Endothelial cell of umbilical vein (primary cell): ENCODE measurements at regions of chr20 and their contacts with region 1.

Region 1: GRCh38 chr20:57698117-57698866 is 11.5 kb downstream of the PMEPA1 start:
- DNase-seq: peak; percentile 99
- H3K4me3 ChIP-seq: peak overlapping the region in 1 of 3 experiments; percentile 25
- H3K27ac ChIP-seq: peak overlapping the region; percentile 80
- H3K4me1 ChIP-seq: peaks cover 30% of the 10 kb centered on the region
- H3K27me3 ChIP-seq: no peaks in the 10 kb centered on the region
- CTCF ChIP-seq: no peak
- POLR2A ChIP-seq: peak; percentile 68

Region 2: GRCh38 chr20:57175397-57176010 is 522.8 kb before region 1 on chr20:
- CTCF ChIA-PET with region 1: no interaction called
- POLR2A ChIA-PET with region 1: no interaction called
- dilution Hi-C with region 1: no loop called
- intact Hi-C with region 1: no loop called
- DNase-seq: no peak
- H3K4me3 ChIP-seq: no peak overlapping the region
- H3K27ac ChIP-seq: no peak overlapping the region
- H3K4me1 ChIP-seq: no peaks in the 10 kb centered on the region
- H3K27me3 ChIP-seq: no peaks in the 10 kb centered on the region
- CTCF ChIP-seq: no peak
- POLR2A ChIP-seq: no peak

Region 3: GRCh38 chr20:57628047-57628961 is 70.0 kb before region 1 on chr20:
- CTCF ChIA-PET with region 1: no interaction called
- POLR2A ChIA-PET with region 1: no interaction called
- dilution Hi-C with region 1: no loop called
- intact Hi-C with region 1: loop called (anchors 1 kb)
- DNase-seq: peak; percentile 86
- H3K4me3 ChIP-seq: no peak overlapping the region
- H3K27ac ChIP-seq: peak overlapping the region; percentile 61
- H3K4me1 ChIP-seq: peaks cover 8% of the 10 kb centered on the region
- H3K27me3 ChIP-seq: peaks cover 6% of the 10 kb centered on the region in 2 experiments
- CTCF ChIP-seq: no peak
- POLR2A ChIP-seq: no peak

Region 4: DNA sequence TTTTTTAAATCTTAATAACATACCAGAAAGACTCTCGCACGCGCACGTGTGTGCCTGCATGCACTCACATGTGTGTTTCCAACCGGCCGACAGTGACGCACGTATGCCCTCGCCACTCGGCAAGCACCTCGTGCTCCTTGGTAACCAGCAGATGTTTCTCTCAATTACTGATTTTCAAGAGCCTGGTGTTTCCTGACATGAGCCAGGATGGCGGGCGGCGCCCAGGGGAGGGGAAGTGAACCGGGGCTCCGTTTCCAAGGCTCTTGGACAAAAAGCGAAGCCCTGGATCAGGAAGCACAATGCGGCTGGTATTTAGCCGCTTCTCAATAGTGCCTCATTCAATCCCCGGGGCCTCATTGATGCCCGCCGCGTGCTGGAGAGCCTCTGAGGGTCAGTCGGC is 26.1 kb before region 1 on chr20:
- CTCF ChIA-PET with region 1: no interaction called
- POLR2A ChIA-PET with region 1: no interaction called
- dilution Hi-C with region 1: no loop called
- intact Hi-C with region 1: loop called (anchors 1 kb)
- DNase-seq: peak; percentile 86
- H3K4me3 ChIP-seq: no peak overlapping the region
- H3K27ac ChIP-seq: peak overlapping the region; percentile 61
- H3K4me1 ChIP-seq: peaks cover 7% of the 10 kb centered on the region
- H3K27me3 ChIP-seq: no peaks in the 10 kb centered on the region
- CTCF ChIP-seq: no peak
- POLR2A ChIP-seq: no peak

Region 5: GRCh38 chr20:57709931-57710799 is 11.9 kb after region 1 on chr20 and contains the start of gene PMEPA1:
- CTCF ChIA-PET with region 1: interaction called, 22 read pairs
- POLR2A ChIA-PET with region 1: no interaction called
- dilution Hi-C with region 1: no loop called
- intact Hi-C with region 1: loop called (anchors 1 kb)
- DNase-seq: peak; percentile 96
- H3K4me3 ChIP-seq: peak within 1 kb of the TSS; percentile 79 to 88 (median 81)
- H3K27ac ChIP-seq: peak within 1 kb of the TSS; percentile 83
- H3K4me1 ChIP-seq: peaks cover 14% of the 10 kb centered on the region
- H3K27me3 ChIP-seq: no peaks in the 10 kb centered on the region
- CTCF ChIP-seq: peak in 1 of 2 donors; percentile 15
- POLR2A ChIP-seq: no peak
- total RNA-seq, gene PMEPA1: 31.6 and 47.1 TPM in 2 replicates

Region 6: GRCh38 chr20:57769756-57770155 is 71.5 kb after region 1 on chr20:
- CTCF ChIA-PET with region 1: interaction called, 3 read pairs
- POLR2A ChIA-PET with region 1: no interaction called
- dilution Hi-C with region 1: no loop called
- intact Hi-C with region 1: loop called (anchors 1 kb)
- DNase-seq: peak; percentile 61
- H3K4me3 ChIP-seq: no peak overlapping the region
- H3K27ac ChIP-seq: peak overlapping the region; percentile 62
- H3K4me1 ChIP-seq: peaks cover 44% of the 10 kb centered on the region
- H3K27me3 ChIP-seq: no peaks in the 10 kb centered on the region
- CTCF ChIP-seq: no peak
- POLR2A ChIP-seq: no peak

Region 7: GRCh38 chr20:57782375-57783041 is 84.2 kb after region 1 on chr20:
- CTCF ChIA-PET with region 1: no interaction called
- POLR2A ChIA-PET with region 1: no interaction called
- dilution Hi-C with region 1: no loop called
- intact Hi-C with region 1: no loop called
- DNase-seq: no peak
- H3K4me3 ChIP-seq: no peak overlapping the region
- H3K27ac ChIP-seq: no peak overlapping the region
- H3K4me1 ChIP-seq: no peaks in the 10 kb centered on the region
- H3K27me3 ChIP-seq: peaks cover 0 to 5% of the 10 kb centered on the region in 2 experiments
- CTCF ChIP-seq: no peak
- POLR2A ChIP-seq: no peak

Region 8: DNA sequence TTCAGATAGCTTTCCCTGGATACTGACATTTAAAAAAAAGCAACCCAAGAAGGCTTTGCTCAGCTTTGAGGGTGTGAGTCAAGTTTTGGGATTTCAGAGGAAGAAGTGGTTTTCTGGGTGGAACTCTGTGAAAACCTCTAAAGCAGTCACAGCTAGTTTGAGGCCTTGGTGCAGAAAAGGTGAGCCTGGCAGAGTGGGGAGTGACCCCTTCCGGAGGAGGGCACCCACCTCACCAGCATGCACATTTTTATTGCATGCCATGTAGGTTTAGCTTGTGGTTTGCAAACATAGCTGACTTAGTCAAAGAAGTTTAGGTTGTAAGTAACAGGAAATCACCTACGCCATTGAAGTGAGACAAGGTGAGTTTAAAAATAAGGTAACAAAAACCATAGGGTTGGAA is 158.4 kb after region 1 on chr20:
- CTCF ChIA-PET with region 1: no interaction called
- POLR2A ChIA-PET with region 1: no interaction called
- dilution Hi-C with region 1: no loop called
- intact Hi-C with region 1: no loop called
- DNase-seq: no peak
- H3K4me3 ChIP-seq: no peak overlapping the region
- H3K27ac ChIP-seq: no peak overlapping the region
- H3K4me1 ChIP-seq: no peaks in the 10 kb centered on the region
- H3K27me3 ChIP-seq: peaks cover 3 to 5% of the 10 kb centered on the region in 2 experiments
- CTCF ChIP-seq: no peak
- POLR2A ChIP-seq: no peak

Region 9: GRCh38 chr20:58078741-58079522 is 380.6 kb after region 1 on chr20:
- CTCF ChIA-PET with region 1: interaction called, 4 read pairs
- POLR2A ChIA-PET with region 1: no interaction called
- dilution Hi-C with region 1: no loop called
- intact Hi-C with region 1: loop called (anchors 1 kb)
- DNase-seq: peak; percentile 71
- H3K4me3 ChIP-seq: no peak overlapping the region
- H3K27ac ChIP-seq: peak overlapping the region; percentile 22
- H3K4me1 ChIP-seq: peaks cover 45% of the 10 kb centered on the region
- H3K27me3 ChIP-seq: no peaks in the 10 kb centered on the region
- CTCF ChIP-seq: no peak
- POLR2A ChIP-seq: no peak